Lower lobe of right lung (tissue), 2 donors: ENCODE measurements at regions of chr3 and their contacts with region 1.

Region 1: DNA sequence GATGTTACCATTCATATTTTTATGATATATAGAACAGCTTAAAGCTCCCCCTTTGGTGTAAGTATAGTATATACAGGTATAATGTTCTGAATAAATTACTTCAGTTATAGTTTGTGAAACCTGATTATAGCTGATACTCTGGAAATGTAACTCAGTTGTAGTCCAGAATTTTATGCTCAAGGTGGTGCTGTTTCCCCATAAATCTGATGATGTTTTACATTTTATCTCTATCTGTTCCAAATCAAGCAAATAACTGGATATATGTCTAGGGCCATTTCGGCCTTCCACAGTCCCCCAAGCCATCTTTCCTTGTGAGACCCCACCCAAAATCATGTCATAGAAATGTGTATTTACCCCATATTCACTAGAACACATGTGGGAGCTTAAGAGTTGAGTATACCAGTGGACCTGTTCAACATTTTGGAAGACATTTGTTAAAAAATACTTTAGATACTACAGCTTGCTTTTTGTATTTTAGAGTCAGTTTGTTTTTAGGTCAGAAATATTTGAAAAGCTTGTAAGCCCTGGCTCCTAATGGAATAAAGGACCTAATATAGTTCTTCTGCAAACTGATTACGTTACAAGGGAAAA is 107.1 kb downstream of the ATG7 start:
- DNase-seq: no peak
- ATAC-seq: peak in 1 of 2 donors; percentile 60
- H3K4me3 ChIP-seq: no peak overlapping the region
- H3K27ac ChIP-seq: peak overlapping the region; percentile 51
- H3K4me1 ChIP-seq: peaks cover 10% of the 10 kb centered on the region
- H3K27me3 ChIP-seq: no peaks in the 10 kb centered on the region
- CTCF ChIP-seq: peak; percentile 57

Region 2: GRCh38 chr3:10957976-10958749 is 421.2 kb before region 1 on chr3:
- intact Hi-C with region 1: no loop called
- DNase-seq: peak; percentile 95
- ATAC-seq: peak; percentile 85 to 91
- H3K4me3 ChIP-seq: no peak overlapping the region
- H3K27ac ChIP-seq: no peak overlapping the region
- H3K4me1 ChIP-seq: peaks cover 33% of the 10 kb centered on the region
- H3K27me3 ChIP-seq: no peaks in the 10 kb centered on the region
- CTCF ChIP-seq: no peak

Region 3: DNA sequence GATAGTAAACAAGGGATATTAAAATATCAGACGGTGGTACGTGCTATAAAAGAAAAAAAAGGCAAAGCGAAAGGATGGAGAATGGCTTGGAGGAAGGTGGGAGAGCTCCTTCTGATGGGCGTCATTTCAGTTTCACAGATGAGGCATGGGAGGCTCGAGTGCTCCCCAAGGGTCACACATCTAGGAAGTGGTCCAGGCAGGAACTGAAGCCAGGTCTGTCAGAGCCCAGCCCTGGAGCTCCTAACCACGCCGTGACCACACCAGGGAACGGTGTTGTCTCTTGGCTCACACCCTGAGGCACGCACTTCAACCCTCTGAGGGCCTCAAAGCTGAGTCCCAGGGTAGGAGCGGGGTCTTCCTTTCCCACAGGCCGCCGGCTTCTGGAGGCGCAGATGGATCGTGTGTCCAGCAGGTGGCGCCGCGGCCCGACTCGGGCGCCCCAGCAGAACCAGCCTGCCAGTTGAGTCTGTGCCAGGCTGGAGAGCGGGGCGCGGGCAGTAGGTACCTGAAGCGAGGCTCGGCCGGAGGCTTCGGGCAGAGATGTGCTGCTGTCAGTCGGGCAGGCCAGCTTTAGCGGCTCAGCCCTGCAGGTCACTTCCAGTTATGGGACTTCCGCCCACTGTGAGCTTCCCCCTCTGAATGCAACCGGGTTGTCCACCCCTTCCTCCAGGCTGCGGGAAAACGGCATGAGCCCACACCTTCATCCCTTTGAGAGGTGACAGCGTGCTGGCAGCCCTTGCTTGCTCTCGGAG is 318.7 kb before region 1 on chr3:
- intact Hi-C with region 1: no loop called
- DNase-seq: peak; percentile 80
- ATAC-seq: peak; percentile 89 to 92
- H3K4me3 ChIP-seq: peak overlapping the region; percentile 29
- H3K27ac ChIP-seq: no peak overlapping the region
- H3K4me1 ChIP-seq: peaks cover 7% of the 10 kb centered on the region
- H3K27me3 ChIP-seq: peaks cover 14% of the 10 kb centered on the region
- CTCF ChIP-seq: peak; percentile 93

Region 4: DNA sequence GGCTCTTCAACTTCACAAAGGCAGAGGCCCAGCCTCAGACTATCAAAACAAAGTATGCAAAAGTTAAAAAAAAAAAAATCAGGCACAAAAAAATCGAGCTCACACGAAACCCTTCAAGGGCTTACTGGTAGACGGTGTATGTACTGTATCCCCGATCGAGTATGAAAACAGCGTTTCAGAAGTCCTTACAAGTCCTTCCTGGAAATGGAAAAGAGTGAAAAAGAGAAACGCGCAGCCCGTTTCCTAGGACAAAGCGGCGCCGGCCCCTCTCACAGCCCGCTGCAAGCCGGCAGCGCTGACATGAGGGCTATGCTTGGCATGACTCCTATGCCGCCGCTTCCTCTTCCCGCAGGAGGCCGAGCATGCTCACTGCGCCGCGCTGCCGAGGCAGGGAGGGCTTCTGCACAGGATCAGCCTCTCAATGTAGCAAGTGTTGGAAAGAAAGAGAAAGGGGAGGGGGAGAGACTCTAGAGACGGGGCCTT is 264.3 kb after region 1 on chr3 and contains the start of gene VGLL4:
- intact Hi-C with region 1: loop called (anchors 5 kb)
- DNase-seq: peak; percentile 91
- ATAC-seq: peak; percentile 94
- H3K4me3 ChIP-seq: peak within 1 kb of the TSS; percentile 69
- H3K27ac ChIP-seq: peak within 1 kb of the TSS; percentile 87
- H3K4me1 ChIP-seq: peaks cover 39% of the 10 kb centered on the region
- H3K27me3 ChIP-seq: no peaks in the 10 kb centered on the region
- CTCF ChIP-seq: peak; percentile 22
- total RNA-seq, gene VGLL4: 45.5 TPM

Region 5: DNA sequence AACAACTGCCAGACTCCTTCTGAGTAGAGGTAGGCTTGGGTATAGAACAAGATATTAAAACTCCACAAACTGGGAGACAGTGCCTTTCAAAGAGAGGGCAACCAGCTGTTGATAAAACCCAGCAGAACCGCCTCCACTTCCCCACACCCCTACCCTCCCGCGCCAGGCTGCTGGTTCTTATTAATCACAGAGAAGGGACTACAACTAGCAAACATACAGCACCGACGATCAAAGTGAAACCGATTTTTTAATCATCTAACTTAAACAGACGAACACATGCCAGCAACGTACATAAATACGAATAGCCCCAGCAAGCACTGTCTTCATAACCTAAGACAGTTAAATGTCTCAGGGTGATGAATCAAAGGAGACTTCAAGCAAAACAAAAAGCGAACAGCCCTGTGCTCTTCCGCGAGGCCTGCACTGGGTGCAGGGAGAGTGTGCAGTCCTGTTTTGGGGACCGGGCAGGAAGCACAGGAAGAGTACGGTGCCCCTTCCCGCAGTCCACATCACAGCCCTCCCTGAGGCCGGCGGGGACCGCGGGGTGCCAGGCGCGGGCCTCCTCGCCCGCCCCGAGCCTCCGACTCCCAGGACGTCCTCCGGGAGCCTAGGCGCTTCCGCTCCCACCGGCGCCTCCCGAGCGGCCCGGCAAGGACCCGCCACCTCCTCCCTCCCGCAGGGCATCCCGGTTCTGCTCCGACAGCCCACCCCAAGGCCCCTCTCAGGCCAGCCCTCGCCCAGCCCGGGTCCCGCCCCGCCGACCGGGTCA is 339.5 kb after region 1 on chr3:
- intact Hi-C with region 1: no loop called
- DNase-seq: peak; percentile 64
- ATAC-seq: peak; percentile 1 to 9
- H3K4me3 ChIP-seq: peak overlapping the region; percentile 96
- H3K27ac ChIP-seq: peak overlapping the region; percentile 92
- H3K4me1 ChIP-seq: peaks cover 23% of the 10 kb centered on the region
- H3K27me3 ChIP-seq: no peaks in the 10 kb centered on the region
- CTCF ChIP-seq: no peak